ENCODE measurements at regions of chr3 and their contacts with region 1.

Region 1: GRCh38 chr3:50321336-50322114 is 1.0 kb downstream of the HYAL2 start:
- H3K4me3 Mint-ChIP-seq: peak overlapping the region; percentile 78
- H3K27ac Mint-ChIP-seq: peak overlapping the region; percentile 97
- H3K4me1 Mint-ChIP-seq: peaks cover 83% of the 10 kb centered on the region
- H3K27me3 Mint-ChIP-seq: no peaks in the 10 kb centered on the region

Region 2: GRCh38 chr3:50192689-50193141 is 128.8 kb before region 1 on chr3:
- intact Hi-C with region 1: no loop called
- H3K4me3 Mint-ChIP-seq: no peak overlapping the region
- H3K27ac Mint-ChIP-seq: no peak overlapping the region
- H3K4me1 Mint-ChIP-seq: peaks cover 22% of the 10 kb centered on the region
- H3K27me3 Mint-ChIP-seq: peaks cover 46% of the 10 kb centered on the region

Region 3: GRCh38 chr3:50298836-50299637 is 22.5 kb before region 1 on chr3 and contains the starts of genes HYAL3 and NAA80:
- intact Hi-C with region 1: loop called (anchors 1 kb)
- H3K4me3 Mint-ChIP-seq: peak within 1 kb of the TSS; percentile 86
- H3K27ac Mint-ChIP-seq: peak within 1 kb of the TSS; percentile 96
- H3K4me1 Mint-ChIP-seq: peaks cover 41% of the 10 kb centered on the region
- H3K27me3 Mint-ChIP-seq: no peaks in the 10 kb centered on the region

Measured in dendritic cell treated with granulocyte-macrophage colony-stimulating factor and Interleukin-4, amounts not matched to agents 40 ng/mL and 50 ng/mL, for 4 days (primary cell).